HepG2 (cell line): ENCODE measurements at regions of chr2 and their contacts with region 1.

Region 1: DNA sequence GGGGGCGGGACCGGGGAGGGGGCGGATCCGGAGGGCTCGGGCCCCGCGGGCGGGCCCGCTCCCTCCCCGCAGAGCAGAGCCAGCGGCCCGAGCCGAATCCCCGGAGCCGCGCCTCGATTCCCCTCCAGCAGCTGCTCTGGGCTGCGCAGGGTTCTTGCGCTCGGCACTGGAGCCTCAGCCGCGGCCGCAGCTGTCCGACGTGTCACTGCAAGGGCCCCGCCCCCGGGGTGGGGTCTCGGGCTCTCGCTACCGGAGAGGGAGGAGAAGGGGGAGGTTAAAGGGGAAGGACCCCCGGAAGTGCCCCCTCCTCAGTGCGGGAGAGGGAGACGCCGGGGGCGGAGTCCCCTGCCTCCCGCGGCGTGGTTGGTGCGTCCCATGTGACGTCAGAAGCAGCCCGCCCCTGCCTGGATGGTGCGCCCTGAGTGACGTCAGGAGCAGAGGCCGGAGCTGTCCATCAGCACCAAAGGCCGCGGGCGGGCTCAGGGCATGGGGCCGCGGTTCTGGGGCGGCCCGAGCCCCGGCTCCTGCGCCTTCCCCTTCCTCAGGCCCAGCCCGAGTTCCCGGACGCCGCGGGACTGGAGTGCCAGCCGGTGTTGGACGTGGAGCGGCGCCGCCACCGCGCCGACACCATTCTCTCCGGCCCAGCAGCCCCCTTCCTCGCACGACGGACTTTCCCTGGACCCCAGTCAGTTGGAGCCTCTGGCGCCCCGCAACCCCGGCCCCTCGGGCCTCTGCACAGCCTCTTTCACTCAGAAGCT is at the starts of genes CHPF and TMEM198:
- DNase-seq: peak; percentile 99
- ATAC-seq: peak; percentile 78
- H3K4me3 ChIP-seq: peak within 1 kb of the TSS; percentile 87 to 90 (median 89)
- H3K27ac ChIP-seq: peak within 1 kb of the TSS; percentile 82
- H3K4me1 ChIP-seq: peaks cover 51% of the 10 kb centered on the region
- H3K27me3 ChIP-seq: no peaks in the 10 kb centered on the region; a peak in 1 of 5 replicates
- CTCF ChIP-seq: peak; percentile 31; the same call in 1 of the 2 replicates
- EP300 ChIP-seq: peak in 1 of 2 experiments; percentile 59; a peak in 1 of 4 replicates
- POLR2A ChIP-seq: peak in 1 of 2 experiments; percentile 71; a peak in 2 of 4 replicates
- RAD21 ChIP-seq: peak; percentile 47
- total RNA-seq, gene CHPF: 34.7 and 79.6 TPM in 2 replicates
- total RNA-seq, gene TMEM198: 11.6 and 17.3 TPM in 2 replicates

Region 2: DNA sequence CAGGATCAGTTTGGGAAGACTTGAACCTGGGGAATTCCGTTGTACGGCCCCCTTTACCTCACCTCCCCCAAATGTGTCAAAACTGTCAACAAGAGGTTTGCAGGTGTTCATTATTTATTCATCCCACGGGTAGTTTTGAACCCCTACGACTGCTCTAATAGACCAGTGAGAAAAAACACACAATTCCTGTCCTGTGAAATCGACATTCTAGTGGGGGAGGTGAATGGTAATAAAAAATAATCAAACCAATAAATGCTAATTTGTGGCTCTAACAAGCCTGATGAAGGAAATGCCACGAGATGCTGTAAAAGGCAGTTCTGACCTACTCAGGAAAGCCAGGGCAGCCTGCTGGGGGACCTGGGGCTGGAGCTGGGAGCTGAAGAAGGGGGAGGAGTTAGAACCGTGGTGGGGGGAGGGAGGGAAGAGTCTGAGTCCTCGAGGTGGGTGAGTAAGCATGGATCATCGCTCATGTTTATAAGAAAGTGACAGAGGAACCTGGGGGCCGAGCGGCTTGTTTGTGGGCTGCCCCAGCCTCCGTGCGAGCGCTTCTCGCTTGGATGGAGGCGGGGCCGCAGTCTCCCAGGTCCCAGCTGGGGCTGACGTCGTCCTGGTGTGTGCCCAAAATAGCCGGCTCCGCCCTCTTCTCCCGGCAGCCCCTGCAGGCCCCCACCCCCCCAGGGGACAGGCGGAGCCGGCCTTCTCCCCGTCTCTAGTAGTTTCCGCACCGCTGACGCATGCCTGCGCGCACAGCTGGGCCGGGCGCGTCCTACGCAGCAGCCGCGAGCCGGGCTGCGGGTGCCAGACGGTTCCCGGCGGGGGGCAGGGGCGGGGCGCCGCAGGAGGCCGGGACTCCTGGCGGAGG is 264.9 kb before region 1 on chr2 and contains the start of gene DNAJB2:
- CTCF ChIA-PET with region 1: no interaction called
- POLR2A ChIA-PET with region 1: no interaction called
- in situ Hi-C with region 1: no loop called
- intact Hi-C with region 1: no loop called
- DNase-seq: peak; percentile 93
- ATAC-seq: peak; percentile 92
- H3K4me3 ChIP-seq: peak within 1 kb of the TSS; percentile 59 to 77 (median 73)
- H3K27ac ChIP-seq: peak within 1 kb of the TSS; percentile 62
- H3K4me1 ChIP-seq: peaks cover 37% of the 10 kb centered on the region
- H3K27me3 ChIP-seq: 0 out of 5 replicates have a peak, but pooled peaks cover 0 to 5% of the 10 kb centered on the region in 2 experiments
- CTCF ChIP-seq: no peak; the same call in 1 of the 2 replicates
- EP300 ChIP-seq: no peak; a peak in 1 of 4 replicates
- POLR2A ChIP-seq: peak; percentile 52 to 79; a peak in 3 of 4 replicates
- RAD21 ChIP-seq: no peak
- total RNA-seq, gene DNAJB2: 18.6 and 21.3 TPM in 2 replicates

Region 3: GRCh38 chr2:219498280-219499057 is 45.3 kb before region 1 on chr2 and contains the start of gene GMPPA:
- CTCF ChIA-PET with region 1: no interaction called
- POLR2A ChIA-PET with region 1: interaction called, 18 read pairs
- in situ Hi-C with region 1: no loop called
- intact Hi-C with region 1: no loop called
- DNase-seq: peak; percentile 99
- ATAC-seq: peak; percentile 82
- H3K4me3 ChIP-seq: peak within 1 kb of the TSS; percentile 79 to 93 (median 89)
- H3K27ac ChIP-seq: peak within 1 kb of the TSS; percentile 70
- H3K4me1 ChIP-seq: peaks cover 56% of the 10 kb centered on the region
- H3K27me3 ChIP-seq: peaks cover 6 to 40% of the 10 kb centered on the region in 2 experiments; a peak in 4 of 5 replicates
- CTCF ChIP-seq: peak; percentile 36
- EP300 ChIP-seq: peak in 1 of 2 experiments; percentile 7; a peak in 2 of 4 replicates
- POLR2A ChIP-seq: peak in 1 of 2 experiments; percentile 84; a peak in 2 of 4 replicates
- RAD21 ChIP-seq: no peak
- total RNA-seq, gene GMPPA: 81.1 and 88.7 TPM in 2 replicates

Region 4: GRCh38 chr2:219571311-219572236 is 27.8 kb after region 1 on chr2 and contains the start of gene OBSL1:
- CTCF ChIA-PET with region 1: no interaction called
- POLR2A ChIA-PET with region 1: interaction called, 32 read pairs
- in situ Hi-C with region 1: no loop called
- intact Hi-C with region 1: loop called (anchors 1 kb)
- DNase-seq: peak; percentile 90
- ATAC-seq: peak; percentile 85
- H3K4me3 ChIP-seq: peak within 1 kb of the TSS; percentile 90 to 95 (median 94)
- H3K27ac ChIP-seq: peak within 1 kb of the TSS; percentile 94
- H3K4me1 ChIP-seq: peaks cover 66% of the 10 kb centered on the region
- H3K27me3 ChIP-seq: no peaks in the 10 kb centered on the region
- CTCF ChIP-seq: peak; percentile 30; the same call in 1 of the 2 replicates
- EP300 ChIP-seq: peak; percentile 17 to 69; a peak in 3 of 4 replicates
- POLR2A ChIP-seq: peak in 1 of 2 experiments; percentile 63; a peak in 1 of 4 replicates
- RAD21 ChIP-seq: no peak; the same call in 1 of the 2 replicates
- total RNA-seq, gene OBSL1: 65.4 and 86.7 TPM in 2 replicates

Region 5: DNA sequence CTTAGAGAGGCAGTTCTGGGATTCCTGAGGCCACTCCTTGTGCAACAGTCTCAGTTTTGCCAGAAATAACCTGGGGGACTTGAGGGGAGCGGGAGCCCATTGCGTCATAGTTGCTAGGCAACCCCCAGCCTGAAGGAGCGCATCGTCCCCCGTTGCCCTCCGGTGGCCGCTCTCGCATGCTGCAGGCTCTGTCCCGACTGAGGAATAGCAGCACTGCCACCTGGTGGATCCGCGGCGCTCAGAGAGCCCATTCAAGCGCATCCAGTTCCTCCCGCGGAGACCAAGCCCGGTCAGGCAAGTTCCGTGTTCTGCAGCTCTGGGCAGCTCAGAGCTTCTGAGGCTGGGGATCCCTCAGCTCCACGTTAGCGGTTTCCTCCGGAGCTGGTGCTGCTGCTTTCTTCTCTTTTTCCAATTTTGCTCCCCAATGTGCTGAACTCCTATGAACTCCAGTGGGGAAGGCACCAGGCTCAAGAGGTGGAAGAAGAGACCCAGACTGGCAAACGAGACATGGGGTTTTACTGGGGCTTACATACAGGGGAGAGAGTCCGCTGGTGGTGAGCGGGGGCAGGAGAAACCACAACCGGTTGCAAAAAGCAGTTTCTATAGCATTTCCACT is 98.8 kb after region 1 on chr2:
- CTCF ChIA-PET with region 1: interaction called, 127 read pairs
- POLR2A ChIA-PET with region 1: interaction called, 4 read pairs
- in situ Hi-C with region 1: loop called (anchors 5 kb)
- intact Hi-C with region 1: loop called (anchors 1 kb)
- DNase-seq: peak; percentile 93
- ATAC-seq: peak; percentile 92
- H3K4me3 ChIP-seq: peak overlapping the region in 1 of 3 experiments; percentile 36; a peak in 1 of 6 replicates
- H3K27ac ChIP-seq: no peak overlapping the region
- H3K4me1 ChIP-seq: peaks cover 29% of the 10 kb centered on the region
- H3K27me3 ChIP-seq: peaks cover 18 to 77% of the 10 kb centered on the region in 2 experiments
- CTCF ChIP-seq: peak; percentile 100
- EP300 ChIP-seq: peak in 1 of 2 experiments; percentile 37; a peak in 1 of 4 replicates
- POLR2A ChIP-seq: no peak
- RAD21 ChIP-seq: peak; percentile 100